Psoas muscle (tissue), 8 donors: ENCODE measurements at regions of chr16 and their contacts with region 1.

Region 1: GRCh38 chr16:62738666-62739460 is 702.6 kb upstream of the CDH8 start:
- DNase-seq: no peak
- ATAC-seq: no peak
- H3K4me3 ChIP-seq: no peak overlapping the region
- H3K27ac ChIP-seq: no peak overlapping the region
- H3K4me1 ChIP-seq: no peaks in the 10 kb centered on the region
- H3K27me3 ChIP-seq: no peaks in the 10 kb centered on the region
- CTCF ChIP-seq: no peak

Region 2: GRCh38 chr16:62712566-62712965 is 26.3 kb before region 1 on chr16:
- intact Hi-C with region 1: no loop called
- DNase-seq: no peak
- ATAC-seq: no peak
- H3K4me3 ChIP-seq: no peak overlapping the region
- H3K27ac ChIP-seq: no peak overlapping the region
- H3K4me1 ChIP-seq: no peaks in the 10 kb centered on the region
- H3K27me3 ChIP-seq: no peaks in the 10 kb centered on the region
- CTCF ChIP-seq: no peak

Region 3: GRCh38 chr16:62794724-62795123 is 55.9 kb after region 1 on chr16:
- intact Hi-C with region 1: loop called in 1 of 2 experiments (anchors 5 kb)
- DNase-seq: no peak
- ATAC-seq: no peak
- H3K4me3 ChIP-seq: no peak overlapping the region
- H3K27ac ChIP-seq: no peak overlapping the region
- H3K4me1 ChIP-seq: no peaks in the 10 kb centered on the region
- H3K27me3 ChIP-seq: no peaks in the 10 kb centered on the region
- CTCF ChIP-seq: no peak